Left colon (tissue), 2 donors: ENCODE measurements at regions of chr7 and their contacts with region 1.

Region 1: DNA sequence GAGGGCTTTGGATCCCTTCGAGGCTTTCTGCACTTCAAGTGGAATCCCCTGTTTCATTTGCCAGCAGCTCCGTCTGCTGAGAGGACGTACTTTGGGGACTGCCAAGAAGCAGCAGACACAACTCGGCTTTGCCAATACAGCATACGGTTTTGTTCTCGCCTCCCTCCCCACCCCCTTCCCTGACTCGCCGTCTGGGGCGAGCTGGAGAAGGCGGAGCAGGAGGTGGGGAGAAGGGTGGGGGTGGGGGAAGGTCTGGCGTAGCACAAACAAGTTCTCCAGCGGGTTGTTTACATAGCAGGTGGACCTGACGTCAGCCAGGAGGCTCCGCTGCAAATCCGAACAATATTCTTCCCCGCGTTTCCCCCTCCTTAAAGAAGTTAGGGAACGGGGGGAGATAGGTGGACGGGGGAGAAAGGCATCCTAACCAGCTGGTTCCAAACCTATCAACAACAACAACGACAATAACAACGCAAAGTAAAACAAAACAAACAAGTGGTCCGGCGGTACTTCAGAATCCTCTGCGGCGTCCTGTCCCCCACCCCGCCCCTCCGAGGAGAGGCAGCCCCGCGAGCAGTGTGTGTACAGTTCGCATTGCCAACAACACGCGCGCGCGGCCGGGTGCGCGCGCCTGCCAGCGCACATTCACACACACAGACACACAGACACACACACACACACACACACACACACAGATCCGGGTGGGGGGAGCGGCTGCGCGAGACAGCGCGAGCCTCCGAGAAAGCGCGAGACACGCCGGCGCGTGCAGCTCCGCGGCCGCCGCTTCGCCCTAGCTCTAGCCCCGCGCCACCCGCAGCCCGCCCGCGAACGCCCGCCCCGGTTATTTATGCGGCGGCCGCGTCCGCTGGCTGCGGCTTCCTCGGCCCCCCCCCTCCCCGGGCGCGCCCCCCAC is 167.0 kb upstream of the PPP1R3A start:
- DNase-seq: peak; percentile 86 to 94
- ATAC-seq: peak; percentile 70

Region 2: DNA sequence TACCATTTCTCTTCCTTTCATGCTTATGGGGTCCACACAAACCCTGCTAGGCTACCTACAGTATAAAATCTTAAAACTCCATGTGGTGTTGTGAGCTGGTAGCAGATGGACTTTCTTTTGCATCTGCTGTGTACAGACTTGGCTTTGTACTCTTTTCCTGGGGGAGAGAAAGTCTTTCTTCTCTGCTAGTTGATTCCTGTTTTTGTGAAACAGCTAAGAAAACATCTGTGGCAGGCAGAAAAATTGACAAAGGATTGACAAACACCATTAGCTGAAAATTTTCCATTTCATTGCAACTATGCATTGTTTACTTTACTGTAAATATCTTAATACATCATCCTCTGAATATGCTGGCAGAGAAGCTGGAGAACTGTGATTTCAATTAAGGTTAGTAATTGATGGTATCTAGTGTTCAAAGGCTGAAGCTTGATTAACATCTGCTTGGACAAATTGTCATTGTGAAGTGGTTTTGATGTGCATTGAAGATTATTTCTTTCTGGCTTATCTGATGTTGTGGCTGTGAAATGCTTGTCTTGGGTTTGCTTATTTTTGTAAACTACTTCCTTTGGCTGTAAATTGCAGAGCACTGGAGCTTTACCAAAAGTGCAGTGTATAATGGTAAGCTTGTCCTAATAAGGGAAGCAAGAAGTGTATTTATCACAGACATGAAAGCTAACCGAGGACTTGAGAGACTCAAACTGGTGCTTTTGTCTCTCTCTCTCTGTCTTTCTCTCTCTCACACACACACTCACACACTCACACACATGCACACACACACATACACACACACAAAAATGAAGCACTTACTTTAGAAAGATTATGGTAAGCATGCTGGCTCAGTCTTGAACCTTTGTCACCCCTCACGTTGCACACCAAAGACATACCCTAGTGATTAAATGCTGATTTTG is 328.6 kb after region 1 on chr7 and contains the start of gene FOXP2:
- intact Hi-C with region 1: loop called in 1 of 2 experiments (anchors 5 kb)
- DNase-seq: no peak
- ATAC-seq: peak; percentile 50
- total RNA-seq, gene FOXP2: 12.8 to 21.1 TPM

Region 3: GRCh38 chr7:114645451-114645850 is 559.6 kb after region 1 on chr7:
- intact Hi-C with region 1: loop called in 1 of 2 experiments (anchors 10 kb)
- DNase-seq: no peak
- ATAC-seq: no peak